ENCODE measurements at regions of chr18 and their contacts with region 1.

Region 1: DNA sequence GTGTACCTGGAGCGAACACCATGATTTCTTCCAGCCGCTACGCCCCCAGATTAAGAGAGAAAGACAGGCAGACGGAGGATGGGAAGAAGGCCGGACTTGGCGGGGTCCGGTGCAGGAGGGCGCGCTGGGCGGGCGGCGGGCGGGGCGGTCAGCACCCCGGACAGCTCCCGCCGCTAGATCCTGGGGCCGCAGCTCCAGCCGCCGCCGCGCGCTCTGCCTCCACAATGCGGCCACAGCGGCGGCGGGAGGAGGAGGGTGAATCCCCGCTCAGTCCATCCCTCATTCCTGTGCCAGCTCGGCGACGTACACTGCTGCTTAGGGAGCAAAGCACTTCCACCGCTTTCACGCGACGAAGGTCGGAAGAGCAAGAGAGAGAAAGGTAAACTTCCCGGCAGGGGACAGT is at the start of gene AKAIN1:
- DNase-seq: peak; percentile 1
- ATAC-seq: peak; percentile 99
- H3K4me3 ChIP-seq: no peak within 1 kb of the TSS
- H3K27ac ChIP-seq: no peak within 1 kb of the TSS
- H3K4me1 ChIP-seq: no peaks in the 10 kb centered on the region
- H3K27me3 ChIP-seq: peaks cover 0 to 12% of the 10 kb centered on the region in 2 experiments; a peak in 1 of 5 replicates
- CTCF ChIP-seq: no peak
- EP300 ChIP-seq: no peak
- POLR2A ChIP-seq: no peak
- RAD21 ChIP-seq: peak; percentile 38; the same call in 1 of the 2 replicates
- total RNA-seq, gene AKAIN1: not detected in 2 replicates

Region 2: DNA sequence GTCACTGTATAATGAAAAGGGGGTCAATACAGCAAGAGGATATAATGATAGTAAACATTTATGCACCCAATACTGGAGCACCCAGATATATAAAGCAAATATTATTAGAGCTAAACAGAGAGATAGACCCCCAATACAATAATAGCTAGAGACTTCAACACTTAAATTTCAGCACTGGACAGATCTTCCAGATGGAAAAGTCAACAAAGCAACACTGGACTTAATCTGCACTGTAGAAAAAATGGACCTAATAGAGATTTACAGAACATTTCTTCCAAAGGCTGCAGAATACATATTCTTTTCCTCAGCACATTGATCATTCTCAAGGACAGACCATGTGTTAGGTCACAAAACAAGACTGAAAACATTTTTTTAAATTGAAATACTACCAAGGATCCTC is 71.8 kb after region 1 on chr18:
- CTCF ChIA-PET with region 1: no interaction called
- POLR2A ChIA-PET with region 1: no interaction called
- in situ Hi-C with region 1: no loop called
- intact Hi-C with region 1: no loop called
- DNase-seq: no peak
- ATAC-seq: no peak
- H3K4me3 ChIP-seq: no peak overlapping the region
- H3K27ac ChIP-seq: no peak overlapping the region
- H3K4me1 ChIP-seq: no peaks in the 10 kb centered on the region
- H3K27me3 ChIP-seq: no peaks in the 10 kb centered on the region; a peak in 1 of 5 replicates
- CTCF ChIP-seq: no peak
- EP300 ChIP-seq: no peak
- POLR2A ChIP-seq: no peak
- RAD21 ChIP-seq: no peak

Region 3: DNA sequence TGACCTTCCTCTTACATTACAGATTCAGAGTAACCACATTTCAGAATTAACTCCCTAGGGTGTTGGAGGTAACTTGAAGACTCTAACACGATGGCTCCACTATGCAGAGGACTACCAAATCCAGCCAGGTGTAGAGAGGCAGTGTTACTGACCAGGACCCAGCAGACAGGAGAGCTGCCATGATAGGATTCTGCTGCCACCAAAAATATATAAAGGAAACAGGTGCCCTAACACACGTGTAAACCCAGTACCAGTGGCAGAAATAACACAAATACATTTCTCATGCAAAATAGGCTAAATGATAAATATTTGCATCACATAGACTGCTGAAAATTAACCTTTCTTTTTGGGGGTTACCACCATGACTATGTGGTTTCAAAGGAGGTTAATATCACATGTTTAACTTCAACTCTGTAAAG is 91.5 kb after region 1 on chr18:
- CTCF ChIA-PET with region 1: no interaction called
- POLR2A ChIA-PET with region 1: no interaction called
- in situ Hi-C with region 1: no loop called
- intact Hi-C with region 1: loop called (anchors 10 kb)
- DNase-seq: no peak
- ATAC-seq: no peak
- H3K4me3 ChIP-seq: no peak overlapping the region
- H3K27ac ChIP-seq: no peak overlapping the region
- H3K4me1 ChIP-seq: peaks cover 5% of the 10 kb centered on the region
- H3K27me3 ChIP-seq: no peaks in the 10 kb centered on the region
- CTCF ChIP-seq: no peak
- EP300 ChIP-seq: no peak
- POLR2A ChIP-seq: no peak
- RAD21 ChIP-seq: no peak

Measured in HepG2 (cell line).